ENCODE measurements at regions of chr3 and their contacts with region 1.

Region 1: GRCh38 chr3:150546226-150547044 is at the starts of genes EIF2A and SERP1:
- DNase-seq: peak; percentile 99 to 100 (median 99)
- H3K4me3 ChIP-seq: peak within 1 kb of the TSS; percentile 89
- H3K4me3 Mint-ChIP-seq: peak within 1 kb of the TSS; percentile 92 to 100 (median 97)
- H3K27ac ChIP-seq: peak within 1 kb of the TSS; percentile 88
- H3K27ac Mint-ChIP-seq: peak within 1 kb of the TSS; percentile 98 to 100 (median 99)
- H3K4me1 ChIP-seq: peaks cover 41% of the 10 kb centered on the region
- H3K4me1 Mint-ChIP-seq: peaks cover 61 to 82% (median 80%) of the 10 kb centered on the region in 3 donors
- H3K27me3 ChIP-seq: no peaks in the 10 kb centered on the region
- H3K27me3 Mint-ChIP-seq: no peaks in the 10 kb centered on the region
- total RNA-seq, gene EIF2A: 128 to 131 TPM
- total RNA-seq, gene SERP1: 127 to 135 TPM

Region 2: DNA sequence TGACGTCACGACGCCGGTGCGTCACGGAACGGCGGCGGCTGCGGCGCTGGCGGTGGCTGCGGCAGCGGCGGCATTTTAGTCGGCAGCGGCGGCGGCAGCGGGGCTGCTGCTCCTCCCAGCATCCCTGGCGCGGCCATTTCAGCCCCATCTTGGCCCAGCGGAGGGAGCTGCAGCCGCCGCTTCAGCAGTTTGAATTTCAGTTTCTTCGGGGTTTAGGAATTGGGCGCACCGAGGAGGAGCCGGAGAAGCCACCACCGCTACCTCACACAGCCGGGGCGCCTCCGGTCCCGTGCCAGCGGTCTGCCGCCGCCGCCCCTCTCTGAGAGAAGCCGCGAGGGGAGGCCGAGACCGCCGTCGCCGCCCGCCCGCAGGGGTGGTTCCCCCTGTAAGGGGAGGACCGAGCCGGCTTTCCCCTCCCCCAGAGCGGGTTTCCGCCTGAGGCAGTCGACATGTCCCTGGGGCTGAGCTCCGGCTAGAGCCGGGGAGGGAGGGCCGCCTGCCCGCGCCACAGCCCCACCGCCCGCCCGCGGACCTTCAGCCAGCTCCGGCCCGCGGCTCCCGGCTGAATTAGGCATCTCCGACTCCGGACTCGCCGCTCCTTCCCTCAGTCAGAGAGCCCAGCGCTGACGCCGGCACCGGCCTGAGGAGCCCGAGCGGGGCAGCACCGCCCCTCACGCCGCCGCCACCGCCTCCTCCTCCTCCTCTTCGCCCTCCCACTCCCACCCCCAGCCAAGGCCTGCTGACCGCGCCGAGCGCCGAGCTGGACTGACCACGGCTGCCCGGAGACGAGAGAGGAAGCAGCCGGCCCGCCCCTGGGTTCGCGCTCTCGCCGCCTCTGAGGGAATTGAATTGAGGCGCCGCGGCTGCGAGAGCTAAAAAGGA is 138.0 kb before region 1 on chr3 and contains the start of gene TSC22D2:
- CTCF ChIA-PET with region 1: interaction called, 5 read pairs
- POLR2A ChIA-PET with region 1: interaction called, 35 read pairs
- DNase-seq: peak; percentile 94 to 98 (median 97)
- H3K4me3 ChIP-seq: peak within 1 kb of the TSS; percentile 94
- H3K4me3 Mint-ChIP-seq: peak within 1 kb of the TSS; percentile 86 to 100 (median 97)
- H3K27ac ChIP-seq: peak within 1 kb of the TSS; percentile 91
- H3K27ac Mint-ChIP-seq: peak within 1 kb of the TSS; percentile 86 to 100 (median 98)
- H3K4me1 ChIP-seq: peaks cover 28% of the 10 kb centered on the region
- H3K4me1 Mint-ChIP-seq: peaks cover 35 to 40% (median 38%) of the 10 kb centered on the region in 3 donors
- H3K27me3 ChIP-seq: no peaks in the 10 kb centered on the region
- H3K27me3 Mint-ChIP-seq: peaks cover 0 to 2% of the 10 kb centered on the region in 2 donors
- total RNA-seq, gene TSC22D2: 20.9 to 22.3 TPM

Region 3: DNA sequence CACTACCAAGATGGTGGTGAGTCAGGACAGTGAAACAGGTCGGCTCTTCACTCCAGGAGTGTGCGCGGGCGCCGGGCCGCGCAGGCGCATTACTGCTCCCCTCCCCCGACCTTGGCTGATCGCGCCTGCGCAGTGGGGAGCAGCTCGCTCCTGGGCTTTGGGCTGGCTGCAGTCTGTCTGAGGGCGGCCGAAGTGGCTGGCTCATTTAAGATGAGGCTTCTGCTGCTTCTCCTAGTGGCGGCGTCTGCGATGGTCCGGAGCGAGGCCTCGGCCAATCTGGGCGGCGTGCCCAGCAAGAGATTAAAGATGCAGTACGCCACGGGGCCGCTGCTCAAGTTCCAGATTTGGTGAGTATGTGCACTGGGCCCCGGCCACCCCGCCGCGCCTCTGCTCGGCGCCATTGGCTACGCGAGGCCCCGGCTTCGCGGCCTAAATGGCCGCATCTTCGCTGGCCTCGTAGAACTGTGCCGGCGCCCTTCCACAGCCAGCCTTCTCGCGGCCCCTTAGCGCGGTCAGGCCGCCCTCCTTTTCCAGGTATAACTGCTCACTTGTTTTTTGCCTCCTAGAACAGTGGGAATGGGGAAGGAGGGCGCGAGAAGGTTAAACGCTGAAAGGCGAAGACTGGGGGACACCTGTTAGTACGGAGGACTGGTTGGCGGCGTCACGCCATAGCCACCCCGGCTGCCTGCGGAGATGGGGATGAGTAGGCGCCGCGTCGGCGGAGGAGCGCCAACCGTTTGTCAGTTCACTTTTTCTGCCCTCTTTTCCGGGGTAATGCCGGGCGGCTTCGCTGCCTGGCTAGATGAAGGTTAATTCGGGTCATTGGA is 56.9 kb after region 1 on chr3 and contains the start of gene SELENOT:
- CTCF ChIA-PET with region 1: interaction called, 4 read pairs
- POLR2A ChIA-PET with region 1: interaction called, 36 read pairs
- DNase-seq: peak; percentile 91 to 97 (median 96)
- H3K4me3 ChIP-seq: peak within 1 kb of the TSS; percentile 89
- H3K4me3 Mint-ChIP-seq: peak within 1 kb of the TSS; percentile 93 to 99 (median 98)
- H3K27ac ChIP-seq: peak within 1 kb of the TSS; percentile 92
- H3K27ac Mint-ChIP-seq: peak within 1 kb of the TSS; percentile 96 to 100 (median 99)
- H3K4me1 ChIP-seq: peaks cover 51% of the 10 kb centered on the region
- H3K4me1 Mint-ChIP-seq: peaks cover 57 to 82% (median 78%) of the 10 kb centered on the region in 3 donors
- H3K27me3 ChIP-seq: no peaks in the 10 kb centered on the region
- H3K27me3 Mint-ChIP-seq: peaks cover 0 to 7% of the 10 kb centered on the region in 2 donors
- total RNA-seq, gene SELENOT: 158 to 162 TPM

Region 4: DNA sequence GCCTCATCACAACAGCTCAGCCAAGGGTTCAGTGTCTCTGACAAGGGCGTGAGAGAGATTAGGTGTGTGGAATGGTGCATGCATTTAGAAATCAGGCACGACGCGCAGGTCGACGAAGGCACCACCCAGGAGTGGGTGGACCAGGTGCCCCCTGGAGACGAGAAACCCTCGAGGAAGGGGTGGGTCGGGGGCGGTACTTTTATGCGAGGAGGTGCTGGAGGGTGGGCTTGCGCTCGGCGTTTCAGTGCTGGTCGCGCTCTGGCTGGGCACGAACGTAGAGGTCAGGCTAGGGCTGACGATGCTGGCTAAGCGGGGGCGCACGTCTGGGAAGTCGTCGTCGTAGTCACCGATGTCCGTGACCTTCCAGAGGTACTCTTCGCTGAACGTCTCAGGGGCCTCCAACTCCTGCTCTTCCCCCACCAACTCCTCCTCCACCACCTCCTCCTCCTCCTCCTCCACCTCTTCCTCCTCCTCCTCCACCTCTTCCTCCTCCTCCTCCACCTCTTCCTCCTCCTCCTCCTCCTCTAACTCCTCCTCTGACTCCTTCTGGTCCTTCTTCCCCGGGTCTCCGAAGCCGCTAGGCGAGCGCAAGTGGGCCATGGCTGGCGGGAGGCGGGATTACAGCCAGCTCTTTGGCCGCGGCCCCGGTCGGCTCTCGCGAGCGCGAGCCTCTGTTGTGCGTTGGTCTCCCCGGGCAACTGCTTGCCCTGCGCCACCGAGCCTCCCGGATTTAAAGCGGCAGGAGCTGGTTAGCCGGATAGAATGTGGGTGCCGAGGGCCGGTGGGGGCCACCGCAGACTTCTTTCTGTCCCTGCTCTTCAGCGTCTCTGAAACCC is 157.1 kb after region 1 on chr3 and contains the start of gene ERICH6:
- CTCF ChIA-PET with region 1: interaction called, 3 read pairs
- POLR2A ChIA-PET with region 1: interaction called, 16 read pairs
- DNase-seq: peak; percentile 61 to 86 (median 80)
- H3K4me3 ChIP-seq: peak within 1 kb of the TSS; percentile 86
- H3K4me3 Mint-ChIP-seq: peak within 1 kb of the TSS; percentile 91 to 99 (median 97)
- H3K27ac ChIP-seq: peak within 1 kb of the TSS; percentile 91
- H3K27ac Mint-ChIP-seq: peak within 1 kb of the TSS; percentile 82 to 99 (median 98)
- H3K4me1 ChIP-seq: peaks cover 10% of the 10 kb centered on the region
- H3K4me1 Mint-ChIP-seq: peaks cover 19 to 33% (median 20%) of the 10 kb centered on the region in 3 donors
- H3K27me3 ChIP-seq: no peaks in the 10 kb centered on the region
- H3K27me3 Mint-ChIP-seq: peaks cover 0 to 11% of the 10 kb centered on the region in 2 donors
- total RNA-seq, gene ERICH6: 0.39 TPM in 1 of 2 experiments, not detected in the other

Region 5: GRCh38 chr3:150751753-150752263 is 205.4 kb after region 1 on chr3:
- CTCF ChIA-PET with region 1: no interaction called
- POLR2A ChIA-PET with region 1: no interaction called
- DNase-seq: no peak
- H3K4me3 ChIP-seq: no peak overlapping the region
- H3K4me3 Mint-ChIP-seq: no peak overlapping the region
- H3K27ac ChIP-seq: no peak overlapping the region
- H3K27ac Mint-ChIP-seq: peak overlapping the region in 2 of 8 donors; percentile 8 to 60
- H3K4me1 ChIP-seq: peaks cover 24% of the 10 kb centered on the region
- H3K4me1 Mint-ChIP-seq: peaks cover 69 to 94% (median 84%) of the 10 kb centered on the region in 3 donors
- H3K27me3 ChIP-seq: no peaks in the 10 kb centered on the region
- H3K27me3 Mint-ChIP-seq: no peaks in the 10 kb centered on the region

Measured in CD8-positive, alpha-beta memory T cell (primary cell).